OCI-LY7 (cell line): ENCODE measurements at regions of chr2 and their contacts with region 1.

Region 1: GRCh38 chr2:71130113-71130904 is at the starts of genes MCEE and MPHOSPH10:
- DNase-seq: peak; percentile 90
- H3K4me3 ChIP-seq: peak within 1 kb of the TSS; percentile 95
- H3K27ac ChIP-seq: peak within 1 kb of the TSS; percentile 80
- H3K4me1 ChIP-seq: peaks cover 37% of the 10 kb centered on the region
- CTCF ChIP-seq: no peak
- total RNA-seq, gene MCEE: 30.8 and 35.4 TPM in 2 replicates
- total RNA-seq, gene MPHOSPH10: 18.7 and 31.5 TPM in 2 replicates

Region 2: DNA sequence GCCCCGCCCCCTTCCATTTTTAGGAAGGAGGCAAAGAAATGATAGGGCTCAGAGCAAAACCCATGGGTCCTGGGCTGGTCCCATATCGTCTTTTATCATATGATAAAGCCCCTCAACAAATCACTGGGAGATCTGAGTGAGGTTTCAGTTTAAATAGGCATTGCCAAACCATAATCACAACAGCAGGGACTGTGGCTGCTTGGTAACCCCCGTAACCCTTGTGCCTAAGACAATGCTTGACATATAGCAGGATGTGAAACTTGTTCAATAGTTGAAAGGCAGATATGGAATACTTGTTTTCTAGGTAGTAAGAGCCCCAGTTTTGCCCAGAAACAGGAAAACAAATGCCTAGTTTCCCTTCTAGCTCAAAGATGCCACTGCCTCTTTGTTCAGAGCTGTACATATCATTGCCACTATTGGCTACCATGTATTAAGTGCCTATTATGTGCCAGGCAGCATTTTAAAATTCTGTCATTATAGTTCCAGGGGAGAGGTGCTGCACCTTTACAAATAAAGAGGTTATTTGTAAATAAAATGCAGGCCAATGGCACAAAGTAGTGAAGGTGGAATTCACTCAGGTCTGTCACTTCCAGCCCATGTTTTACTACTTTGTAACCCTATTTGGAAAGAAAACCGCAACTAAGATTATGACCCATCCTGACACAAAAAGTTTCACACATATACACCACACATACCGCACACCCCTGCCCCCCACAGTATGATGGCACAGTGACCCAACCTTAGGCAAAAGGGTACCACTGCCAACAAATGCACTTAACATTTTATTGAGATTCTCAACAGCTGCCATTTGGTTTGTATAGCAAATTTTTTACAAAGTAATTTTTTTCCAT is 47.7 kb before region 1 on chr2:
- CTCF ChIA-PET with region 1: no interaction called
- POLR2A ChIA-PET with region 1: no interaction called
- intact Hi-C with region 1: loop called (anchors 1 kb)
- DNase-seq: no peak
- H3K4me3 ChIP-seq: no peak overlapping the region
- H3K27ac ChIP-seq: no peak overlapping the region
- H3K4me1 ChIP-seq: no peaks in the 10 kb centered on the region
- CTCF ChIP-seq: no peak

Region 3: DNA sequence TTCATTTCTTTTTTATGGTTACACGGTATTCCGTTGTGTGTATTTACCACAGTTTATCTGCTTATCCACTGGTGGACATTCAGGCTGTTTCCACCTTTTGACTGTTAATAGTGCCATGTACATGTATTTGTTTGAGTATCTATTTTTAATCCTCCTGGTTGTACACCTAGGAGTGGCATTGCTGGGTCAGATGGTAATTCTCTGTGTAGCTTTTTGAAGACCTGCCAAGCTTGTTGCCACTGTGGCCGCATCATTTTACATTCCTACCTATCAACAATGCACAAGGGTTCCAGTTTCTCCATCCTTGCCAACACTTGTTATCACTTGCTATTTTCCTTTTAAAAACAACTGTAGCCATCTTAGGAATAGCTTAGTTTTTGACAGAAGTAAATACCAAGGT is 13.5 kb after region 1 on chr2:
- CTCF ChIA-PET with region 1: no interaction called
- POLR2A ChIA-PET with region 1: interaction called, 11 read pairs
- intact Hi-C with region 1: no loop called
- DNase-seq: no peak
- H3K4me3 ChIP-seq: no peak overlapping the region
- H3K27ac ChIP-seq: no peak overlapping the region
- H3K4me1 ChIP-seq: no peaks in the 10 kb centered on the region
- CTCF ChIP-seq: no peak